CD8-positive, alpha-beta T cell (primary cell): ENCODE measurements at regions of chr11 and their contacts with region 1.

Region 1: DNA sequence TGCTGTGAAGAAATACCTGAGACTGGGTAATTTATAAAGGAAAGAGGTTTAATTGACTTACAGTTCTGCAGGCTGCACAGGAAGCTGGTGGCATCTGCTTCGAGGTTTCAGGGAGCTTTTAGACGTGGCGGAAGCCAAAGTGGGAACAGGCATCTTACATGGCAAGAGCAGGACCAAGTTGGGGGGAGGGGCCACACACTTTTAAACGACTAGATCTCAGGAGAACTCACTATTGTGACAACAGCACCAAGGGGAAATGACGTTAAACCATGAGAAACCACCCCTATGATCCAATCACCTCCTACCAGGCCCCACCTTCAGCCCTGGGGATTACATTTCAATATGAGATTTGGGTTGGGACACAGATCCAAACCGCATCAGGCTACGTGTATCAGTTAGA is 11.1 kb upstream of the SCGB1D4 start:
- DNase-seq: peak in 1 of 9 experiments; percentile 26
- ATAC-seq: no peak
- H3K4me3 ChIP-seq: no peak overlapping the region
- H3K4me3 Mint-ChIP-seq: no peak overlapping the region
- H3K27ac ChIP-seq: no peak overlapping the region
- H3K27ac Mint-ChIP-seq: no peak overlapping the region
- H3K4me1 ChIP-seq: peaks cover 6% of the 10 kb centered on the region
- H3K4me1 Mint-ChIP-seq: peaks cover 13% of the 10 kb centered on the region
- H3K27me3 ChIP-seq: no peaks in the 10 kb centered on the region
- H3K27me3 Mint-ChIP-seq: peaks cover 26% of the 10 kb centered on the region
- CTCF ChIP-seq: no peak

Region 2: DNA sequence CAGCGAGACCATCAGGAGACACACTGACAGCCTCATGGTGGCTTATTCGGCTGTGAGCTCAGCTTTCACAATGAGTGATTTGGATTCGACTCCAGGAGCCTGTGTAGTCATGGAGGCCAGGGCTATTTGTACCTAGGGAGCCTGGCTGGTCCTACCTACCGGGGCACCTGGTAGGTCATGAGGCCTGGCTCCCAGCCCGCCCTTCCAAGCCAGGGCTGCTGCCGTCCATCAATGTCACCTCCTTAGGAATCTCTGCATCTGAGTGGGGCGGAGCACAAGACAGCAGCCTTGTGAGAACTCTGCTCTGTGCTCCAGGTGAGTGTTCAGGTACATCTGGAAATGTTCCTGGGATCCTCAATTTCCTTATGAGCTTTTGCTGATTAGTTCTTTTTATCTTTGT is 11.0 kb before region 1 on chr11 and contains the start of gene SCGB1D4:
- CTCF ChIA-PET with region 1: interaction called, 30 read pairs
- POLR2A ChIA-PET with region 1: no interaction called
- intact Hi-C with region 1: no loop called
- DNase-seq: no peak
- ATAC-seq: no peak
- H3K4me3 ChIP-seq: no peak within 1 kb of the TSS
- H3K4me3 Mint-ChIP-seq: no peak within 1 kb of the TSS
- H3K27ac ChIP-seq: no peak within 1 kb of the TSS
- H3K27ac Mint-ChIP-seq: no peak within 1 kb of the TSS
- H3K4me1 ChIP-seq: no peaks in the 10 kb centered on the region
- H3K4me1 Mint-ChIP-seq: no peaks in the 10 kb centered on the region
- H3K27me3 ChIP-seq: no peaks in the 10 kb centered on the region
- H3K27me3 Mint-ChIP-seq: peaks cover 26% of the 10 kb centered on the region
- CTCF ChIP-seq: no peak
- total RNA-seq, gene SCGB1D4: not detected

Region 3: DNA sequence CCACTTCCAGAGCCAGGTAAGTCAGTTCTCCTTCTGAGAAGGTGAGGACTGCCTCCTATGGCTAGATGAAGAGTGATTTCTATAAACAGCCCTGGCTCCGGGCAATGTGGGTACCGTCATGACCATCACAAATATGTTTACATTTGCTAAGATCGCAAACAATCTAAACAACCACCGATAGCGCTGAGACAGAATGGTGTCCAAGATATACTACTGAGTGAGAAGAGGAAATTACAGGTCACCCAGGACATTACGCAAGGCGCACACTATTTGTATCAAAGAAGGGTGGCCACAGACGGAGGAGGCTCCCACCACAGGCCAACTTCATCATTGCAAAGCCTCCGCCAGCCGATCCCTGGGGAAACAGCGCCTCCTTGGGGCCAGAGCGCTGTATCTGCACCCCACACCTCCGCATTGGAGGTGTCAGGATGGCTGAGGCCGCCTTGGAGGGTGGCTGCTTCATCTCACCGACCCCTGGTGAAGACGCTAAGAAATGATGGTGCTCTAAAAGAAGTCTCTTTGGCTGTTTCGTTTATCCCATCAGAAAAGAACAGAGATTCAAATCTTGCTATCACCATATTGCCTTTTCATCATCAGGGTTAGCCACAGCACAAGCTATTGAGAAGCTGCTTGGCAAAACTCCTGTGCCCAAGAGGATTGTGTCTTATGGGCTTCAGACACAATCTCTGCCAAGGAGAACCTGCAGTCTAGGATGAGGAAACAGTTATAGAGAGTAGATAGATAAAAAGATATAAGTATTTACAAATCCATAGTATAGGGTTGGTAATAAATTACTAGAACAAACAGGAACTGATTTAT is 15.0 kb after region 1 on chr11:
- CTCF ChIA-PET with region 1: interaction called, 27 read pairs
- POLR2A ChIA-PET with region 1: no interaction called
- intact Hi-C with region 1: no loop called
- DNase-seq: peak in 7 of 9 experiments; percentile 37 to 71 (median 54)
- ATAC-seq: peak; percentile 94
- H3K4me3 ChIP-seq: no peak overlapping the region
- H3K4me3 Mint-ChIP-seq: no peak overlapping the region
- H3K27ac ChIP-seq: no peak overlapping the region
- H3K27ac Mint-ChIP-seq: no peak overlapping the region
- H3K4me1 ChIP-seq: no peaks in the 10 kb centered on the region
- H3K4me1 Mint-ChIP-seq: no peaks in the 10 kb centered on the region
- H3K27me3 ChIP-seq: no peaks in the 10 kb centered on the region
- H3K27me3 Mint-ChIP-seq: peaks cover 13% of the 10 kb centered on the region
- CTCF ChIP-seq: peak; percentile 65